Natural killer cell (primary cell): ENCODE measurements at regions of chr5 and their contacts with region 1.

Region 1: DNA sequence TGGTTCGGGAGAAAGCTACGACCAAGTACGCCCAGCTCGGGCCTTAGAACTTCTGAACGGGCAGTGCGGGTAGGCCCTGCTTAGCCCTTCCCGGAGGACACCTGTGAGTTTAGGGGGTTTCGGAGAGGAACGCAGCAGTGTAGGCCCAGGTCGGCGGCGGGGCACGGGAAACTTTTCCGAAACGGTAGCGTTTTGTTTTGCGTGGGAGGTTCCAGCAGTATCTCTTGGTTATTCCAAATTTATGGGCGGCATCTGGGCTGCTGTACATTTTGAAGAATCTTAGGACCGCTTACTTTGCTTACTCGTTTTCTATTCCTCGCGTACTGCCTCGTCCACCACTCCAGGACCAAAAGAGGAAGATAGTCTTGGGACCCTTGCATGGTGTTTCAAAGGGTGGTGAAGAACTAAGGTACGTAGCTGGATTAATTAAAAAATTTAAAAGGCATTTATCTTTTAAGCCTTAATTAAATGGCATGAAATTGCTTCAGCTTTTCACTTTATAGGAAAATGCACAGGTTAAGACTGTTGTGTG is 492 bp downstream of the TENT2 start:
- DNase-seq: no peak
- ATAC-seq: peak in 2 of 3 donors; percentile 3 to 10
- H3K4me3 ChIP-seq: peak overlapping the region; percentile 99
- H3K4me3 Mint-ChIP-seq: peak overlapping the region; percentile 98
- H3K27ac ChIP-seq: peak overlapping the region; percentile 98
- H3K27ac Mint-ChIP-seq: peak overlapping the region; percentile 94 to 98
- H3K4me1 ChIP-seq: peaks cover 12% of the 10 kb centered on the region
- H3K4me1 Mint-ChIP-seq: peaks cover 50 to 54% of the 10 kb centered on the region in 2 donors
- H3K27me3 ChIP-seq: no peaks in the 10 kb centered on the region
- H3K27me3 Mint-ChIP-seq: no peaks in the 10 kb centered on the region
- CTCF ChIP-seq: no peak

Region 2: GRCh38 chr5:79514391-79515105 is 98.2 kb before region 1 on chr5:
- intact Hi-C with region 1: loop called (anchors 10 kb)
- DNase-seq: peak; percentile 90 to 98
- ATAC-seq: peak; percentile 78 to 90 (median 82)
- H3K4me3 ChIP-seq: peak overlapping the region; percentile 88
- H3K4me3 Mint-ChIP-seq: peak overlapping the region; percentile 100
- H3K27ac ChIP-seq: peak overlapping the region; percentile 98
- H3K27ac Mint-ChIP-seq: peak overlapping the region; percentile 97 to 99
- H3K4me1 ChIP-seq: peaks cover 15% of the 10 kb centered on the region
- H3K4me1 Mint-ChIP-seq: peaks cover 23 to 25% of the 10 kb centered on the region in 2 donors
- H3K27me3 ChIP-seq: peaks cover 27% of the 10 kb centered on the region
- H3K27me3 Mint-ChIP-seq: peaks cover 24 to 32% of the 10 kb centered on the region in 2 donors
- CTCF ChIP-seq: no peak

Region 3: GRCh38 chr5:79630444-79630843 is 17.7 kb after region 1 on chr5:
- intact Hi-C with region 1: loop called (anchors 1 kb)
- DNase-seq: peak; percentile 18 to 38
- ATAC-seq: peak; percentile 89 to 93 (median 91)
- H3K4me3 ChIP-seq: no peak overlapping the region
- H3K4me3 Mint-ChIP-seq: peak overlapping the region; percentile 51
- H3K27ac ChIP-seq: peak overlapping the region; percentile 65
- H3K27ac Mint-ChIP-seq: peak overlapping the region; percentile 73 to 87
- H3K4me1 ChIP-seq: peaks cover 23% of the 10 kb centered on the region
- H3K4me1 Mint-ChIP-seq: peaks cover 46 to 51% of the 10 kb centered on the region in 2 donors
- H3K27me3 ChIP-seq: no peaks in the 10 kb centered on the region
- H3K27me3 Mint-ChIP-seq: no peaks in the 10 kb centered on the region
- CTCF ChIP-seq: no peak